IMR-90 (cell line): ENCODE measurements at regions of chr5 and their contacts with region 1.

Region 1: DNA sequence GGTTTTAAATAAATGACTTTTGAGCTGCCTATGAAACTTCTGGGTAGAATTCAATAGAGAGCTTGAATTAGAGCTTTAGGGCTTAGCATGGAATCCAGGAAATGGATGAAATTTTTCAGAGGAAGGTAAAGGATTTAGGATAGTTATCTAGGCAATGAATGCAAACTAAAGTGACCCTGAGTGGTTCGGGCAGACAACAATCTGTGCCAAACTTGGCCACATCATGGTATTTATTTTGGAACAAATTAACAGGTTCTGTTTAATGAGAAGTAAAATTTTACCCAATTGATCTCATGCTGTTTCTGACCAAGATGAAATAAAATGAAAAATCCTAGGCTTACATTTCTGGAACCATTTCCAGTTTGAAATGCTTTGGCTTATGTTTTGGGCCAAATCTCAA is 934.4 kb downstream of the MAT2B start:
- DNase-seq: no peak
- ATAC-seq: no peak
- H3K4me3 ChIP-seq: no peak overlapping the region
- H3K27ac ChIP-seq: no peak overlapping the region
- H3K4me1 ChIP-seq: no peaks in the 10 kb centered on the region
- H3K27me3 ChIP-seq: no peaks in the 10 kb centered on the region
- CTCF ChIP-seq: no peak
- POLR2A ChIP-seq: no peak
- RAD21 ChIP-seq: no peak

Region 2: DNA sequence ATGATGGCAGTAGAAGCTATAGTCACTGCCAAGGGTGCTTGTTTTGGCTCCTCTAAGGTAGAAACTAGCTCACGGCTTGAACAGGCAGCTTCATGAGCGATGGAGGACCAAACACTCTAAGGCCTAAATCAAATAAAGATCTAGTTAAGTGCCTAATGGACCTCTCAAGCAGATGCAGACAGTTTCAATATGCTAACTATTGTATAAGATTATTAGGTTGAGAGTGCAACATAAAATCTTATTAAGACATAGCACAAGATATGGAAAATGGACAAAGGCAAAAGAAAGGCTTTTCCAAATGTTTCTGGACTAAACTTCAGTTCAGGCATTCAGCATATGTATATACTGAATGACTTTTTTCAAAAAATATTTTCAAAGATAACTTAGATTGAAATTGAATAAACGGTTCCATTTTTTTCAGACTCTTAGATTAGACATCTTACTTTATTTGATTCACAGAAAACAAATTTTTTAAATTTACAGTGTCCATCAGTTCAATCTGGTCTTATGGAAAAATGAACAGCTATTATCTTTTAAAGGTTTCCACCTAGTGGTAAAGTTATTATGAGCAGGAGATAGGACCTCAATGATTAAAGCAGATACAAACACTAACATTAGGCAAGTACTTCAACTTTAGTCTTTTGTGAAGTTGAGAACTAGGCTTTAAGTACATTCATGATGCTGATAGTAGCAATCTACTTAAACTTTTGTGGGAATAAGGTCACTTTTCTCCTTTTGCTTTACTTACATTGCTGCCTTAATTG is 233.3 kb after region 1 on chr5:
- CTCF ChIA-PET with region 1: no interaction called
- POLR2A ChIA-PET with region 1: no interaction called
- dilution Hi-C with region 1: no loop called
- in situ Hi-C with region 1: no loop called
- intact Hi-C with region 1: no loop called
- DNase-seq: peak; percentile 17
- ATAC-seq: peak; percentile 69
- H3K4me3 ChIP-seq: no peak overlapping the region
- H3K27ac ChIP-seq: no peak overlapping the region
- H3K4me1 ChIP-seq: 0 out of 2 replicates have a peak, but pooled peaks cover 2% of the 10 kb centered on the region
- H3K27me3 ChIP-seq: no peaks in the 10 kb centered on the region
- CTCF ChIP-seq: peak; percentile 28
- POLR2A ChIP-seq: no peak
- RAD21 ChIP-seq: peak; percentile 16; the same call in 1 of the 2 replicates

Region 3: DNA sequence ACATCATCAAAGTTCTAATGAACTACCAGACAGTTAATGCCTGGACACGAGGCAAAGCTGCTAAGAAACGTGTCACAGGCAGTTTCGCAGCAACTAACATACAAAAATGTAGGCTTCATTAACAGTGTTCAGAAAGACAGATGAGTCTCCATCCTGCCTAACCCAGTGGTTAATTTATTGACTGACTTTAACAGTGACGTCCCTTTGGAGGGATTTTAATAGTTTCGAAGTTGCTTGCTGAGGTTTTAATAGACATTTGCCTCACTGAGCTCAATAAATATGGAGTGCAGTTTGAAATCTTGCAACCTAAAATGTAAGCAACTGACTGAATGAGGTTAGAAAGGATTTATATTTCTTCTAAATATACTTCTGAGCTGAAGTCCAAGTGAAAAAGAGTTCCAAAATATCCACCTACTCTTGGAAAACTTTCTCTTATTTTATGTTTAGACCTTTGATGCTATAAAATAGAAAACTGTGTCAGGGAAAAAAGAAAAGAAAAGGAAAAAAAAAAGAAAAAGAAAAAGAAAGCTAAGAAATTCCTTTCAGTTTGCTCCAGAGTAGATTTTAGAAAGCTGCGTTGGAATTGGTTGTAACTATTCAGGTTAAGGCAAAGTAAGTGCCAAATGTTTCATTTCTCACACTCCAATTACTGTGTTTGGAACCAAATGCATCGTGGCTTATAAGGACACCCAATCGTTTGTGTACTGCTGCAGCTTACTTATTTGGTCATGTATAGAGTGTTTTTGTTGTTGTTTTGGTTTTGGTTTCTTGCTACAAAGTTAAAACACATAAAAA is 1082.2 kb after region 1 on chr5:
- CTCF ChIA-PET with region 1: no interaction called
- POLR2A ChIA-PET with region 1: no interaction called
- dilution Hi-C with region 1: no loop called
- in situ Hi-C with region 1: no loop called
- intact Hi-C with region 1: loop called (anchors 5 kb)
- DNase-seq: peak; percentile 16
- ATAC-seq: peak; percentile 21
- H3K4me3 ChIP-seq: no peak overlapping the region
- H3K27ac ChIP-seq: peak overlapping the region; percentile 41; the same call in 1 of the 2 replicates
- H3K4me1 ChIP-seq: peaks cover 4% of the 10 kb centered on the region; the same call in 1 of the 2 replicates
- H3K27me3 ChIP-seq: no peaks in the 10 kb centered on the region
- CTCF ChIP-seq: no peak
- POLR2A ChIP-seq: no peak
- RAD21 ChIP-seq: no peak